Activated CD4-positive, alpha-beta memory T cell treated with anti-CD3 and anti-CD28 coated beads for 36 hours (primary cell): ENCODE measurements at regions of chr19 and their contacts with region 1.

Region 1: DNA sequence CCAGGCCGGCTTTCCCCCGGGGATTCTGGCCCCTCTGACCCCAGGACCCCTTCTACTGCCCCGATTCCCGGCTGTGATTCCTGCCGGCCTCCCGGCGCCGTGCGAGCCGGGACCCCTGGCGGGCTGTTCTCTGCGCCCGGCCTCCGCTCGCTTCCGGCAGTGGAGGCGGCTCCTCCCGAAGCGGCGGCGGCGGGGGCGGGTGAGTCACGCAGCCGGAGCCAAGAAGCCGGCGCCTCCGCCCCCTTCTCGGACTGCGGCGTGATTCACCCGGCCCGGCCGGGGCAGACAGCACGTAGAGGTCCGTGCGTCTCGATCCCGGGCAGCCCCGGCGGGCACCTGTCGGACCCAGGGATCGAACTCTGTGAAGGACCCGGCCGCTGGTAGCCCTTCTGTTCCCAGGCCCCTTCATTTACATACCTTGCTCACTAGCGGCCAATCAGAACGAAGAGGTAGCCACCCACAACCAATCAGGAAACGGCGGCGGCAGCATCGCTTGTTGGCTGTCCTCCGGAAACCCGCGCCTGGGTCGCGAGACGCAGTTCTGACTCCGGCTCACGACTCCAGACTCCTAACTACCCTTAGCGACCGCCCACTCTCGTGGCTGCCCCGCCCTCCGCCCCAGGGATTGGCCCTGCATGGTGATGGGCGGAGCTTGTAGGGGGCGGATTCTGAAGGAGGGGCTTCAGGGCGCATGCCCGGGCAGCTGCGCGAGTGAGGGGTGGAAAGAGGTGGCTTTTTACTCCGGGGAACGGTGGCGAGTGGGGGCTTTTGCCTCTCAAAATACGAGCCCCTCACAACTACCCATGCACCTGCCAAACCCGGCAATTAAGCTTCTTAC is at the start of gene SERTAD1:
- DNase-seq: peak; percentile 100
- H3K4me3 Mint-ChIP-seq: peak within 1 kb of the TSS; percentile 81
- H3K27ac Mint-ChIP-seq: peak within 1 kb of the TSS; percentile 88
- H3K4me1 Mint-ChIP-seq: peaks cover 17% of the 10 kb centered on the region
- H3K27me3 Mint-ChIP-seq: no peaks in the 10 kb centered on the region
- total RNA-seq, gene SERTAD1: 11.5 to 12.6 TPM

Region 2: DNA sequence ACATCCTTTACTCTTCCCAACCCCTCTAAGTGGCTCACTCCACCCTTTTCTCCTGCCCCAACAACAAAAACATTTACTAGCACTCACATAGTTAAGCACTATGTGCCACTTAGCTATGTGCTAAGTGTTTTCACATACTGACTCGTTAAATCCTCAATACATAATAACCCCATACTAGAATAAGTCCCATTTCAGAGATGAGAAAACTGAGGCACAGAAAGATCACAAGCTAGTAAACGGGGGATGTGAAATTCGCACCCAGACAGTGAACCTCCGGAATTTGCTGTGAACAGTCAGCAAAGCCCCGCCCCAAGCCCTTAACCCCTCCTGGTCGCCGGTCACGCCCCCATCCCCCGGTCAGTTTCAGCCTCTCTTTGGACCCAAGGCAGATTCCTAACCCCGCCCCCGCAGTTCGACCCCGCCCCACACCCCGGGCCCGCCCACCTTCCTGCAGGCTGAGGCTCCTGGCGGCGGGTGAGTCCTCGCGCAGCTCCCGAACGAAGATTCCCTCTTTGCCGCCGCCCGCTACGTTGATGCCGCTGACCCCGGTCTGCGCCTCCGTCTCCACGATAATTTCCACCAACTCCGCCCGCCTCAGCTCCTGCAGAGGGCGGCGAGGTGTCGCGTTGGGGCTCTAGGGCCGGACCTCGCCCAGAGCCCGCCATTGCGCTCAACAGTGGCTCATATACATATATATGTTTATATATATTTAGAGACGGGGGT is 22.2 kb before region 1 on chr19:
- CTCF ChIA-PET with region 1: interaction called, 11 read pairs
- POLR2A ChIA-PET with region 1: interaction called, 4 read pairs
- intact Hi-C with region 1: loop called (anchors 1 kb)
- DNase-seq: peak; percentile 95
- H3K4me3 Mint-ChIP-seq: peak overlapping the region; percentile 78
- H3K27ac Mint-ChIP-seq: peak overlapping the region; percentile 16
- H3K4me1 Mint-ChIP-seq: peaks cover 20% of the 10 kb centered on the region
- H3K27me3 Mint-ChIP-seq: no peaks in the 10 kb centered on the region

Region 3: GRCh38 chr19:40411125-40411842 is 14.4 kb before region 1 on chr19:
- CTCF ChIA-PET with region 1: interaction called, 13 read pairs
- POLR2A ChIA-PET with region 1: interaction called, 3 read pairs
- intact Hi-C with region 1: no loop called
- DNase-seq: no peak
- H3K4me3 Mint-ChIP-seq: no peak overlapping the region
- H3K27ac Mint-ChIP-seq: no peak overlapping the region
- H3K4me1 Mint-ChIP-seq: peaks cover 7% of the 10 kb centered on the region
- H3K27me3 Mint-ChIP-seq: peaks cover 3% of the 10 kb centered on the region